Calu3 (cell line): ENCODE measurements at regions of chr3 and their contacts with region 1.

Region 1: GRCh38 chr3:120147072-120147871 is 53.0 kb upstream of the GSK3B start:
- DNase-seq: peak; percentile 57
- H3K4me3 Mint-ChIP-seq: no peak overlapping the region
- H3K27ac Mint-ChIP-seq: peak overlapping the region; percentile 70
- H3K4me1 Mint-ChIP-seq: peaks cover 58% of the 10 kb centered on the region
- H3K27me3 Mint-ChIP-seq: no peaks in the 10 kb centered on the region
- CTCF ChIP-seq: no peak

Region 2: DNA sequence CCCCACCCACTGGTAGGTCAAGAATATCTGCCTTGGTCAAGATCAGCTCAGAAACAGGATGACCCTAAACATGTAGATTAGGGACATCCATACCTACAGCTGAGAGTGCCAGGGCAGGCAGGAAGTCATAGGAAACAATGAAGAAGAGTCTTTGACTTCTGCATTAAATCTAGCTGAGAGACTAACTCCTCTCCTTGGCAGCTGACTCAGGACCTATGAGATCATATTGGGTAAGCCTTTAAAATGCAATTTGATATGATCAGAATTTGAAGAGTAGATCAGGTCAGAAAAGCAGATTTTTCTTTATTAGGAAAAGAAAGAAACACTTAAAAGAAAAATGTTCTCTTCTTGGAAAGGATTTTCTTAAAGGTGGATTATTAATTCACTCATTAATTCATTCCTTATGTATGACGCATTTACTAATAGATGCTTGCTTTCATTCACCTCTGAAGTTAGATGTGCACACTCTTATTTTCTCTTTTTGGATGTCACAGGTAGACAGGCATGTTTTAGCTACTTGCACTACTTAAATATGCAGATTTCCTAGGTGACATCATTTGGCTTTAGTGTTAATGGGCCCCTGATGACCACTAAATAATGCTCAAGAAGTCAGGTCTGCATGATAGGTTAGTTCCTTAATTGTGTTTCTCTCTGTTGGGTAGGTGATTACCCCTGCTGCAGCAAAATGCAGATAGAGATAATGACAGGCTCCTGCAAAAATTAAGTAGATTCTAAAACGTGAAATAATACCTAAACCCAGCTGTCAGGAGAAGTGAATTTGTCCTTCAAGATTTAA is 17.4 kb before region 1 on chr3:
- CTCF ChIA-PET with region 1: no interaction called
- intact Hi-C with region 1: no loop called
- DNase-seq: no peak
- H3K4me3 Mint-ChIP-seq: no peak overlapping the region
- H3K27ac Mint-ChIP-seq: no peak overlapping the region
- H3K4me1 Mint-ChIP-seq: no peaks in the 10 kb centered on the region
- H3K27me3 Mint-ChIP-seq: no peaks in the 10 kb centered on the region
- CTCF ChIP-seq: no peak

Region 3: DNA sequence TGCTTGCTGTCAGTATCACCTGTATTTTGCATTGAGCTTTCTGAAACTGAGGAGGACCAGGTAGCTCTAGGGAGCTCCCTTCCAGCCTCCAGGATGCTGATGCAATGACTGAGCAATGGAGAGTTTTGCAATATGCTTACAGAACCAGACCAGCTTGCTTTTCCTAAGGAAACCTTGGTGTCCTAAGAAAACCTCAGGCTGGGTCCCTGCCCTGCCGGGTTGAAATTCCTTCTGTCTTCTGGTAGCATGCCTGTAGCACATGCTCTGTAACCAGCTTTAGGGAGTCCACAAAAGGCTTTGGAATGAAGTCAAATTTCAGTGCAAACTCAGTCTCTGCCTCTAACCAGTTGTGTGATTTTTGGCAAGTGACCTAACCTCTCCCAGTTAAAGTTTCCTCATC is 12.8 kb after region 1 on chr3:
- CTCF ChIA-PET with region 1: interaction called, 17 read pairs
- intact Hi-C with region 1: no loop called
- DNase-seq: peak; percentile 76
- H3K4me3 Mint-ChIP-seq: no peak overlapping the region
- H3K27ac Mint-ChIP-seq: peak overlapping the region; percentile 90
- H3K4me1 Mint-ChIP-seq: peaks cover 63% of the 10 kb centered on the region
- H3K27me3 Mint-ChIP-seq: no peaks in the 10 kb centered on the region
- CTCF ChIP-seq: no peak